HEK293T (cell line): ENCODE measurements at regions of chr15 and their contacts with region 1.

Region 1: DNA sequence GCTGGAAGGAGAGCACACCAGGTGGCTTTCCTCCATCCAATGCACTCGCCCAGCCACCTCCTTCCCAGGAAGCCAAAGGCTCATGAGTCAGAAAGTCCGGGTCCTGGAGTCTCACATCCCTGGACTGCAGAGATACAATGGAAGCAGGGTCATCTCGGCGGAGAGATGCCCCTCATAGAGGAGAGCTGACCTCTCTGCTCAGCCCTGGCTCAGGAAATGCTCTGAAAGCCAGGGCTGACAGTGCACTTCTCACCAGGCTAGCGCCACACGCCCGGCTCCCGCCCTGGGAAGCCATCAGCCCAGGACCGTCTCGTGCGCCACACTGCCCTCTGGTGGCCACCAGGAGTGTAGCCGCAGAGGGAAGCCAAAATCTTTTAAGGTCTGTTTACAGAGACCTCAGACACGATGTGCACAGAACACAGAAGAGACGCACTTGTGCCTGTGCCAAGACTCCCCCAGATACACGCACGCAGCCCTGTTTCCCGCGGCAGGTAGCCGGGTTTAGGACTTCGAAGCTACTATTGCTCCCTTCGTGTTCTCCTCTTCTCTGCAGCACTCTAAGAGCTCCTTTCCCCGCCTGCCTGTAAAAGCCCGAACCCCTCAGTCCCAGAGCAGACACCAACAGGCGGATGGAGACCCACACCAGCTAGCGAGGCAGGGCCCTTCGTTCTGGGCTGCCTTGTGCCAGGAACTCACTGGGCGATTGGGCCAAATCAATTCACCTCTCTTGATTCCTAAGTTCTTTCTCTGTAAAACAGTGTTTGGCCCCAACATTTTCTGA is 9.7 kb downstream of the NTRK3 start:
- DNase-seq: peak; percentile 87

Region 2: DNA sequence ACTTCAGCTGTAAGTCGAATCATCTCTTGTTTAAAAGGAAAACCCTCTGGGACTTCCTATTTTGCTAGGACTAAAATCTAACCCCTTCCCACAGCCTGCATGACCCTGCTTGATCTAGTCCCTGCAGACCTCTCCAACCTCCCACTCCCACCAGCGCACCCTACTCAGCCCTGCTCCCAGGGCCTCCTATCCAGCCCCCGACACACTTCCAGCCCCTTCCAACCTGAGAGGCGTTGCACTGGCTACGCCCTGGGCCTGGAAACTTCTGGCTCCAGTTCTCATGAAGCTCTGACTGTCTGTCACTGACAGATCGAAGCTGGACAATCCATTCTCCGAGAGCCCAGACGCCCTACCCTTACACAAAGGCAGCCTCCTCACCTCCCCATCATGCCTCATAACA is 12.1 kb before region 1 on chr15:
- CTCF ChIA-PET with region 1: interaction called, 15 read pairs
- POLR2A ChIA-PET with region 1: no interaction called
- DNase-seq: no peak

Region 3: GRCh38 chr15:88274553-88275460 is 28.0 kb after region 1 on chr15:
- CTCF ChIA-PET with region 1: interaction called, 40 read pairs
- POLR2A ChIA-PET with region 1: no interaction called
- DNase-seq: peak; percentile 87

Region 4: DNA sequence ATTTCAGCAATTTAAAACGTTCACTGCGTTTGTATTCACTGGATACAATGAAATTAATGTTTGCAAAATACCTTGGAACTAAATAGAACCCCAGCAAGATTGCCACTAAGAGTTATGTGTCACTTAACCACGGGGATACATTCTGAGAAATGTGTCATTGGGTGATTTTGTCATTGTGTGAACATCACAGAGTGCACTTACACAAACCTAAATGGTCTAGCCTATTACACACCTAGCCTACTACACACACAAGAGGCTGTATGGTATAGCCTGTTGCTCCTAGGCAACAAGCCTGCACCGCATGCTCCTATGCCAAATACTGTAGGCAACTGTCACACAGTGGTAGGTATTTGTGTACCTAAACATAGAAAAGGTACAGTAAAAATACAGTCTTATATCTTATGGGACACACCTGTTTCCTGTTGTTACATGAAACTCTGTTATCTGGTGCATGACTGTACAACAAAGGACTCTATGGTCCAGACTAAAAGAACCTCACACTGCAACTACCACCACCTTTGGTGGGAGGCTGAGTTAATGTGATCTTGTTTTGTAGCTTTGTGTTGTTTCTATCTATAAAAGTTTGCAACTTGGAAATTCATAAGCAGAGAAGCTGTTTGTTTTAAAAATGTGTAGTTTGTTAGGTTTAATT is 101.8 kb after region 1 on chr15:
- CTCF ChIA-PET with region 1: no interaction called
- POLR2A ChIA-PET with region 1: no interaction called
- DNase-seq: no peak

Region 5: DNA sequence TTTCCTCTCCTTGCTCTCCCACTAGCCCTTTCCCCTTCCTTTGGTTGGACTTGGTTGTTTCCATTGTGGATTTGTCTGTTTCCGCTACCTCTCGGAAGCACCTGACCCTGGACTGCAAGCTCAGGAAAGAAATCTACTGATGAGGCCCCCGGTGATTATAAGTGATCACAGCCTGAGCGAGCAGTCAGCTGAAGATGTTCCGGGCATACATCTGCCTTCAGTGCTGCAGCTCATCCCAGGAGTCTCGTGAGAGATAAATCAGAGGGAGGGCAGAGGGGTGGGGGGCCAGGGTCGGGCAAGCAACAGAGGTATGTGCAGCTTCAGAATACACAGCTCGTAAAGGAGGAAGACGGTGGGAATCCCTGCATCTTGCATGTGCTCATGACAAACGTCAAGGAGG is 118.3 kb after region 1 on chr15:
- CTCF ChIA-PET with region 1: no interaction called
- POLR2A ChIA-PET with region 1: no interaction called
- DNase-seq: no peak